ENCODE measurements at regions of chr12 and their contacts with region 1.

Region 1: DNA sequence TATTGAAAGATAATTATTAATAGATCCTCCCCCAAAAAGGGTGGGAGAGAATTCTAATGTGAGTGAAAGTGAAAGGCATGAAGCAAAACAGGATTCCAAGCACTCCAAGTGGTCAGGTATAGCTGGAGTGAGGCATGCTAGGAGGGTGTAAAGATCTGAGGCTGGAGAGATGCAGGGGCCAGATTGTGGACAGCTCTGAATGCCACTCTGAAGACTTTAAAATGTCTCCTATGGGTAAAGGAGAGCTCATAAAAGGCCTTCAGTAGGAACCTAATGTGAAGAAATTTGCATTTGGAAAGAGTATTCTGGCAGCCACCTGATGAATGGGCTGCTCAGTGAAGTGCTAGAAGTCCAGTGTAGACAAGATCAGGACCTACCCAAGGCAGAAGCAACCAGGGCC is 68.9 kb downstream of the DNAI7 start:
- DNase-seq: no peak
- ATAC-seq: no peak

Region 2: GRCh38 chr12:24991209-24992049 is 134.6 kb before region 1 on chr12:
- intact Hi-C with region 1: loop called (anchors 5 kb)
- DNase-seq: no peak
- ATAC-seq: peak; percentile 87

Region 3: DNA sequence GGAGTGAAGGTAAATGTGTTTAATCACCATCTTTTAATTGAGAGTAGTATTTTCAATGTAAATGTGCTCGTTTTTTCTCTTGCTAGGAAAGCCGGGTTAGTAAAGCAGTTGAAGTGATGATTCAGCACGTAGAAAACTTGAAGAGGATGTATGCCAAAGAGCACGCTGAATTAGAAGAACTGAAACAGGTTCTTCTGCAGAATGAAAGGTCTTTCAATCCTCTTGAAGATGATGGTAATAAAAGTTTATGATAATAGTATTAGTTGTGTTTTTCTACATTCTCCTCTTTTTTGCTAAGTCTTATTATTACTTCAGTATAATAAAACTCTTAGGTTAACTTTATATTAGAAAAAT is 25.0 kb before region 1 on chr12:
- intact Hi-C with region 1: no loop called
- DNase-seq: no peak
- ATAC-seq: no peak